Endothelial cell of umbilical vein (primary cell): ENCODE measurements at regions of chr2 and their contacts with region 1.

Region 1: DNA sequence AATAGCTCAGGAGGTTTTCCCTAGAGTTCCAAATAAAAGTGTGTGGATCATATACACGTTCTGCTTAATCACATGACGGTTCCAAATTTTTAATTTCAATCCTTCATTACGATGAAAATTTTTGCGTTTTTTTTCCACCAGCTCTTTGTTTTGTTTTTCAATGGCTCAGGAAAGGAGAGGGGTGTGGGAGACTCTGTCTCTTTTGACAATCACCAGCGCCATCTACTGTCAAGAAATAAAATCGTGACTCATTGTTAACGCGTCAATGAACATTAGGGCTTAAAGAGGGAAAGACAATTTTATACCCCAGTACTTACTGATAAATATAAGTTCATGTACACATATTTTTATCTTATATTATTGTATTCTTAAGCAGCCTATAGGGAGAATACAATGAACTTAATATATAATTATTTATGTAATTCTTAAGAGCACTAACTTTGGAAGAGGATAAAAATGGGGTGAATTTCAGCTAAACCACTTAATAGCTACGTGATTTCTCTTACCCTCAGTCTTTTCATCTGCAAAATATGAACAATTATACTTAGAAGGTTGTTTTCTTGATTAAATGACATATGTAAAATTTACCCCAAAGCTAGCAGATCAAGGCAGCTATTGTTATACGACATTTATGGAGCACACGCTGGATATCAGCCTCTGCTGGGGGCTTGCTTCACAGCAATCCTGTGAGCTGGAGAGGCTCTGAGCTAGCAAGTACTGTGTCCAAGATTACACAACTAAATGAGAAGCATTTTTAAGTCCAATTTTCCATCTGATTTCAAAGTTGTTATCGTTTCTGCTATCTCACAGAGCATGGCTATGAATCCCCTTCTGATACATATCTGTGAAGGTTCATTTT is 47.4 kb upstream of the RMDN2 start:
- DNase-seq: peak; percentile 73
- H3K4me3 ChIP-seq: no peak overlapping the region
- H3K27ac ChIP-seq: no peak overlapping the region
- H3K4me1 ChIP-seq: peaks cover 3% of the 10 kb centered on the region
- H3K27me3 ChIP-seq: no peaks in the 10 kb centered on the region
- CTCF ChIP-seq: peak; percentile 31 to 39
- POLR2A ChIP-seq: no peak

Region 2: DNA sequence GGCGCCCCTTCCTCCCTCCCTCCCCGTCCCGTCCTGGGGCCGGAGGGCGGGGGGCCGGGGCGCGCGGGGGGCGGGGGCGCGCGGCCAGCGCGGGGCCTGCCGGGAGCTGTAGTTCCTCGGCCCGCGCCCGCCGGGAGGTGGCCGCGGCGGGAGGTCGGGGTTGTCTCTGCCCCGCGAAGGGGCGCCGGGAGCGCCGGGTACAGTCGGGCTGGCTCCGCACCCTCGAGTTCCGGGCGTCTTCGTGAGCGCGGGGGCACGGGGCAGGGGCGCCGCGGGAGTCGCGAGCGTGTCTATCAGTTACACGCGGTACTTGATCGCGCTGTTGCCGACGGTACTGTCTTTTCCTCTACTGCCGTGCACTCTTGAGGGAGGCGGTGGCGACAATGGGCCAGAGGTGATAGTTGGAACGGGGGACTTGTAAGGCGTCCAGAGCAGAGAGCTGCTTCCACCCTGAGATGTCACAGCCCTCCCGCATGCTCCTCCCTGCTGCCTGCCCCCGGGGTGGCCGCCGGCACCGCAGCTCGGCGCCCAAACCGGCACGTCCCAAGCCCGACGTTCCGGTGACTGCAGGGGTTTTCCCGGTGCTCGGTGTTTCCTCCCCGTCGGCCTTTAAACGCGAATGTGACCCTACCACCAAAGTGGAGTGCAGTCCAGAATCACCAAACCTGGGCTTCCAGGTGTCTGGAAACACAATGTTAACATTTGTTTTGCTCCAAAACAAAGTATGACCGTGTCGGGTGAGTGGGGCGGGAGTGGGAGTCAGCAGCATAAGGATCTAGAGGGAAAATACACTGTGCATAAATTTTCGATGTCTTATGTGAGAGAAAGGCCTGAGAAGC is 552.7 kb before region 1 on chr2 and contains the start of gene PRKD3:
- CTCF ChIA-PET with region 1: interaction called, 18 read pairs
- POLR2A ChIA-PET with region 1: no interaction called
- dilution Hi-C with region 1: no loop called
- intact Hi-C with region 1: no loop called
- DNase-seq: peak; percentile 72
- H3K4me3 ChIP-seq: peak within 1 kb of the TSS; percentile 97 to 99 (median 98)
- H3K27ac ChIP-seq: peak within 1 kb of the TSS; percentile 64
- H3K4me1 ChIP-seq: peaks cover 27% of the 10 kb centered on the region
- H3K27me3 ChIP-seq: no peaks in the 10 kb centered on the region
- CTCF ChIP-seq: no peak
- POLR2A ChIP-seq: no peak
- total RNA-seq, gene PRKD3: 47.3 and 48.4 TPM in 2 replicates

Region 3: GRCh38 chr2:37421686-37422085 is 456.0 kb before region 1 on chr2:
- CTCF ChIA-PET with region 1: interaction called, 509 read pairs
- POLR2A ChIA-PET with region 1: no interaction called
- dilution Hi-C with region 1: loop called (anchors 25 kb)
- intact Hi-C with region 1: no loop called
- DNase-seq: no peak
- H3K4me3 ChIP-seq: no peak overlapping the region
- H3K27ac ChIP-seq: no peak overlapping the region
- H3K4me1 ChIP-seq: no peaks in the 10 kb centered on the region
- H3K27me3 ChIP-seq: no peaks in the 10 kb centered on the region
- CTCF ChIP-seq: no peak
- POLR2A ChIP-seq: no peak

Region 4: GRCh38 chr2:37619959-37620300 is 257.8 kb before region 1 on chr2:
- CTCF ChIA-PET with region 1: interaction called, 10 read pairs
- POLR2A ChIA-PET with region 1: no interaction called
- dilution Hi-C with region 1: no loop called
- intact Hi-C with region 1: no loop called
- DNase-seq: no peak
- H3K4me3 ChIP-seq: no peak overlapping the region
- H3K27ac ChIP-seq: no peak overlapping the region
- H3K4me1 ChIP-seq: peaks cover 8% of the 10 kb centered on the region
- H3K27me3 ChIP-seq: no peaks in the 10 kb centered on the region
- CTCF ChIP-seq: no peak
- POLR2A ChIP-seq: no peak

Region 5: DNA sequence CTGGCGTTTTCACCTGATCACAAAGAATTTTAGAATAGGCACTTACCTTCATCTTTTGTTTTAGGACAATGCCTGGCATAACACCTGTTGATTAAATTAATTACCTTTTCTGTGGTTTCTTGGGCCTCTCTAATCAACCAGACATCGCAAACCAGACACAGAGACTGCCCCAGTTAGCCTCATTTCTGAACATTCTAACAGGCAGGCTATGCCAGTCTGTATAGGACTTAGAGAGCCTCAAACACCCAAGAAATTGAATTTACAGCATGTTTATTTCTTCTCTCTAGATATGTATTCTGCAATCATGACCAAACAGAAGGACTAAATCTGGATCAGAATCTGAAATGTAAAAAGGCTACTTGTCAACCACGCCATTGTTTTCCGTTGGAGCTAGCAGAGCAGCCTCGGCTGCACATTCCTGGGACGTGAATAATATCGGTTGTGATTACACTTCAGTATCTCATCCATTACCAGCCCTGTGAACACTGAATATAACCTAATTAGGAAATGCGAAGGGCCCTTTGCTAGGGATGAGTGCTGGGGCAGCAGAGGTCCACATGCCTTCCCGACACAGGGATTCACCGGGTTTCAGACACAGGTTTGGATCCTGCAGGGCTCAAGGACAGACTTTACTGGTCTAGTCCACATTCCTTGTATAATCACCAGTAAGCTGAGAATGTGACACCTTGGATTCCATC is 188.8 kb before region 1 on chr2:
- CTCF ChIA-PET with region 1: interaction called, 10 read pairs
- POLR2A ChIA-PET with region 1: no interaction called
- dilution Hi-C with region 1: no loop called
- intact Hi-C with region 1: no loop called
- DNase-seq: peak; percentile 50
- H3K4me3 ChIP-seq: no peak overlapping the region
- H3K27ac ChIP-seq: peak overlapping the region; percentile 1
- H3K4me1 ChIP-seq: peaks cover 3% of the 10 kb centered on the region
- H3K27me3 ChIP-seq: no peaks in the 10 kb centered on the region
- CTCF ChIP-seq: no peak
- POLR2A ChIP-seq: no peak

Region 6: GRCh38 chr2:37843556-37843955 is 34.1 kb before region 1 on chr2:
- CTCF ChIA-PET with region 1: interaction called, 270 read pairs
- POLR2A ChIA-PET with region 1: interaction called, 3 read pairs
- dilution Hi-C with region 1: no loop called
- intact Hi-C with region 1: no loop called
- DNase-seq: no peak
- H3K4me3 ChIP-seq: no peak overlapping the region
- H3K27ac ChIP-seq: no peak overlapping the region
- H3K4me1 ChIP-seq: no peaks in the 10 kb centered on the region
- H3K27me3 ChIP-seq: no peaks in the 10 kb centered on the region
- CTCF ChIP-seq: no peak
- POLR2A ChIP-seq: no peak

Region 7: GRCh38 chr2:38201784-38202183 is 324.1 kb after region 1 on chr2:
- CTCF ChIA-PET with region 1: no interaction called
- POLR2A ChIA-PET with region 1: no interaction called
- dilution Hi-C with region 1: no loop called
- intact Hi-C with region 1: no loop called
- DNase-seq: no peak
- H3K4me3 ChIP-seq: no peak overlapping the region
- H3K27ac ChIP-seq: no peak overlapping the region
- H3K4me1 ChIP-seq: no peaks in the 10 kb centered on the region
- H3K27me3 ChIP-seq: no peaks in the 10 kb centered on the region
- CTCF ChIP-seq: no peak
- POLR2A ChIP-seq: no peak